Activated T-helper 2 cell treated with anti-CD3 and anti-CD28 coated beads, Interferon-gamma antibody, Interleukin-2, Interleukin-4, amounts not matched to agents 10 μg/mL and 5 μg/mL and 100 μg/mL, durations not matched to agents 14 hours and 24 hours and 36 hours (primary cell): ENCODE measurements at regions of chr11 and their contacts with region 1.

Region 1: GRCh38 chr11:86218125-86219084 is 26.1 kb upstream of the EED start:
- DNase-seq: peak; percentile 49
- H3K4me3 Mint-ChIP-seq: peak overlapping the region; percentile 13
- H3K27ac Mint-ChIP-seq: peak overlapping the region; percentile 70
- H3K4me1 Mint-ChIP-seq: peaks cover 67% of the 10 kb centered on the region
- H3K27me3 Mint-ChIP-seq: no peaks in the 10 kb centered on the region

Region 2: GRCh38 chr11:86021377-86021776 is 197.0 kb before region 1 on chr11:
- intact Hi-C with region 1: no loop called
- DNase-seq: no peak
- H3K4me3 Mint-ChIP-seq: no peak overlapping the region
- H3K27ac Mint-ChIP-seq: peak overlapping the region; percentile 63
- H3K4me1 Mint-ChIP-seq: peaks cover 31% of the 10 kb centered on the region
- H3K27me3 Mint-ChIP-seq: no peaks in the 10 kb centered on the region

Region 3: DNA sequence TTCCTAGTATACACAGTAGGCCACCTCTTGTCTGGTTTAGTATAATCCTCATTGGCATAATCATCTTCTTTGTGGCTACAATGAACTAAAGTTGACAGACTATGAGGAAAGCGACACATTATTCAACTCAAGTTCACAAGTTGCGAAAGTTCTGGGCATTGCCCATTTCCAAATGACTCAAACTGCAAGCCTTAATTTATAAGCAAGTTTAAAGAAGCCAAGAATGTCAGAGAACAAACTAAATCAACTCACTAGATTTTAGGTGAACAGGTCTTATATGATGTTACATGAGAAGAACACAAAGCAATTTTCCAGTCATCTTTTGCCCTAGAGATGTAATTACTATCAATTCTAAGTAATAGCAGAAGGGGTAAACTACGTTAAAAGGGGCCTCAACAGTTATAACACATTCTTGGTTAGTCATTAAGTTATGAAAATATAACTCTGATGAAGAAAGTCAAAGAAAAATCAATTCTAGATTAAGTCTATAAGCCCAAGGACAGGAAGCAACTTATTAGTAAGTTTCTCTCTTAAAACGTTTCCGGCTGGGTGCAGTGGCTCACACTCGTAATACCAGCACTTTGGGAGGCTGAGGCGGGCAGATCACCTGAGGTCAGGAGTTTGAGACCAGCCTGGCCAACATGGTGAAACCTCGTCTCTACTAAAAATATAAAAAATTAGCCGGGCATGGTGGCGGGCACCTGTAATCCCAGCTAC is 171.0 kb before region 1 on chr11:
- intact Hi-C with region 1: loop called (anchors 1 kb)
- DNase-seq: no peak
- H3K4me3 Mint-ChIP-seq: peak overlapping the region; percentile 65
- H3K27ac Mint-ChIP-seq: peak overlapping the region; percentile 96
- H3K4me1 Mint-ChIP-seq: peaks cover 73% of the 10 kb centered on the region
- H3K27me3 Mint-ChIP-seq: no peaks in the 10 kb centered on the region

Region 4: GRCh38 chr11:86138958-86139357 is 79.4 kb before region 1 on chr11:
- intact Hi-C with region 1: loop called (anchors 1 kb)
- DNase-seq: peak; percentile 33
- H3K4me3 Mint-ChIP-seq: peak overlapping the region; percentile 35
- H3K27ac Mint-ChIP-seq: peak overlapping the region; percentile 76
- H3K4me1 Mint-ChIP-seq: peaks cover 63% of the 10 kb centered on the region
- H3K27me3 Mint-ChIP-seq: no peaks in the 10 kb centered on the region

Region 5: GRCh38 chr11:86202013-86202336 is 16.4 kb before region 1 on chr11:
- intact Hi-C with region 1: loop called (anchors 1 kb)
- DNase-seq: no peak
- H3K4me3 Mint-ChIP-seq: no peak overlapping the region
- H3K27ac Mint-ChIP-seq: no peak overlapping the region
- H3K4me1 Mint-ChIP-seq: peaks cover 15% of the 10 kb centered on the region
- H3K27me3 Mint-ChIP-seq: no peaks in the 10 kb centered on the region

Region 6: GRCh38 chr11:86440305-86440716 is 221.9 kb after region 1 on chr11:
- intact Hi-C with region 1: loop called (anchors 10 kb)
- DNase-seq: no peak
- H3K4me3 Mint-ChIP-seq: no peak overlapping the region
- H3K27ac Mint-ChIP-seq: no peak overlapping the region
- H3K4me1 Mint-ChIP-seq: peaks cover 43% of the 10 kb centered on the region
- H3K27me3 Mint-ChIP-seq: no peaks in the 10 kb centered on the region